ENCODE measurements at regions of chr19 and their contacts with region 1.

Region 1: DNA sequence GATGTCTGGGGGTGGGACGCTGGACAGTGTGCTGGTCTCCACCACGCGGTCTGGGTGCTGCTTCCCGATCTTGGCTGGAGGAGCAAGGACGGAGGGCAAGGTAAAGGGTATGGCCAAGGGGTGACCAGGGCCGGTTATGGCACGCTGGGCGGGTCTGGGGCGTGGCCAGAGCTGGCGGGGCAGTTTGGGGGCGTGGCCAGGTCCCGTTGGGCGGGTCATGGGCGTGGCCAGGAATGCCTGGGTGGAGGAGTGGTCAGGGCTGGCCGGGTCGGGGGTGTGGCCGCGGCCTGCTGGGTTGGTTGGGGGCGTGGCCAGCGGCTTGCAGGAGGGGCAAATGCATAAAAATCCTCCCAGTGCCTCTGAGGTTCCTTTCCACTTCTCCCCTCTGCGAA is 19.2 kb downstream of the GPX4 start:
- DNase-seq: peak; percentile 78 to 92 (median 88)
- ATAC-seq: peak; percentile 96
- H3K4me3 ChIP-seq: no peak overlapping the region
- H3K4me1 ChIP-seq: peaks cover 2% of the 10 kb centered on the region
- CTCF ChIP-seq: no peak

Region 2: DNA sequence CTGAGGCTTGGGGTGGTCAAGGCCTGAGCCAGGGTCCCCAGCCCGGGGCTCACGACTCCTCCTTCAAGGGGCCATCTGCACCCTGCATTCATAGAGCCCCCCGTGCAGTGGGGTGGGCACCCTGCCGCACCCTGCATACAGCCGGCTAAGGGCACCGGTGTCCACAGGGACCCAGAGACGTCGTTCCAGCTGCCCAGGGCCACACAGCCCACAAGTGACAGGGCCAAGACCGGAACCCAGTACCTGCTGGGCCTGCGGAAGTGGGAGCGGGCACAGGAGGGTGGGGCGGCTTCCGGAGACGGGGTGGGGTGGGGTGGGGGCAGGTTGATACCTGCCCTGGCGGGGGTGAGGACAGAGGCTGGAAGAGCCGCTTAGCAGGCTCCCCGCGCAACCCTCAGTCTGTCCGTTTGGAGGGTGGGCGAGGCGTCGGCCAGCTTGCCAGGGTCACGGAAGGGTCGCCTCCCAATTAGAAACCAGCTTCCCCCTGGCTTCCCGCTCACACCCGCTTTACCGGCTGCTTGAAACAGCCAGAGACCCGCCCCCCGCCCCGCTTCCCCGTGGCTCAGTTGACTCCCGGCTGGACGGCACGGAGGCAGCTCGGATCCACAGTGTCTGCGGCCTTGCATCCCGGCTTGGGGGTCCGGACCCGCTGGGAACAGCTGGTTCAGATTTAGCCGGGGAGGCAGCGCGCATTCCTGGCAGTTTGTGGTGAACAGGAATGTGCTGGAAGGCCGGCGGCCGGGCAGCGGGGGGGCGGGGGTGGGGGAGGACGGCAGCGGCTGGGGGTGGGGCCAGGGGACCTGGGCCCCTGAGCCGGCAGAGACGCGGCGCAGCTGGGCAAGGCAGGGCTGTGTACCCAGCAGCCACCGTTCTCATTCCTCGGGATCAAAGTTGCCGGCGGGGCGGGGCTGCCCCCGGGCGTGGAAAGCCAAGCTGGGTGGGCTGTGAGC is 94.7 kb before region 1 on chr19:
- intact Hi-C with region 1: no loop called
- DNase-seq: peak; percentile 79 to 92 (median 87)
- ATAC-seq: peak; percentile 84
- H3K4me3 ChIP-seq: peak overlapping the region; percentile 81
- H3K4me1 ChIP-seq: peaks cover 23% of the 10 kb centered on the region
- CTCF ChIP-seq: no peak

Region 3: DNA sequence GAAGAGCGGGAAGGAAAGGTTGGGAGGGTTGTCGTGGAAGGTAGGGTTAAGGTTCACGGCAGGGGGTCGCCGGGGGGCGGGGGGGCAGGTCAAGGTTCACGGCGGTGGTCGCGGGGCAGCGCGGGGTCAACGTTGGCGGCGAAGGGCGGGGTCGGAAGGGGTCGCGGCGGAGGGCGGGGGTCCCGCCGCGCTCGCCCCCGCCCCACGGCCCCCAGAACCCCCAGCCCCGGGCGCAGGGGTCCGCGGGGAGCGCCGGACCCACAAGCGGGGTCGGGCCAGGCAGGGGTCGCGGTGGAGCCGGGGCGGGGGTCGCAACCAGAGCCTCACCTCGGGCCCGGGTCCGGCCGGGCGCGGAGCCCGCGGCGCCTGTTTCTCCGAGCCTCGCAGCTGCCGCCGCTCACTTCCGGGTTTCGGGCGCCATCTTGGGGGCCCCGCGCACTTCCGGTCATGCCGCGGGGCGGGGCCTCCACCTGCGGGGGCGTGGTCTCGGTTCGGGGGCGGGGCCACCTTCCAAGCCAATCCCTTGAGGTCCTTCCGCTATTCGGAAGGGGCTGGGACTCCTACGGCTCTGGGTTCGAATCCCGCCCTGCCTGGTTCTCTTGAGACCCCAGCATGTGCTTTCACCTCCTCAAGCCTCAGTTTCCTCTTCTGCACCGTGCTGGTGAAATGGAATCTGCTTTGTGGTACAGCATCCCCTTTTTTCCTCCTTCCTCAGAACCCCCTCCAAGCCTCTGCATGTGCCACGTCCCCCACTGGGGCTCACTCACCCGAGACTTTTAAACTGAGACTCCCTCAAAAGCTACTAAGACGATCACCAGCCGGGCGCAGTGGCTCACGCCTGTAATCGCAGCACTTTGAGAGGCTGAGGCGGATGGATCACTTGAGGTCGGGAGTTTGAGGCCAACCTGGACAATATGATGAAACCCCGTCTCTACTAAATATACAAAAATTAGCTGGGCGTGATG is 51.2 kb after region 1 on chr19 and contains the start of gene SBNO2:
- intact Hi-C with region 1: loop called in 1 of 2 experiments (anchors 10 kb)
- DNase-seq: peak; percentile 93 to 96 (median 95)
- ATAC-seq: peak; percentile 90
- H3K4me3 ChIP-seq: peak within 1 kb of the TSS; percentile 75
- H3K4me1 ChIP-seq: peaks cover 13% of the 10 kb centered on the region
- CTCF ChIP-seq: no peak
- total RNA-seq, gene SBNO2: 58.0 to 86.6 (median 74.6) TPM